ENCODE measurements at regions of chr7 and their contacts with region 1.

Region 1: GRCh38 chr7:90211391-90212148 is at the start of gene STEAP2:
- DNase-seq: peak in 1 of 9 donors; percentile 35
- ATAC-seq: peak; percentile 68
- H3K4me3 ChIP-seq: no peak within 1 kb of the TSS
- H3K4me3 Mint-ChIP-seq: peak within 1 kb of the TSS in 8 of 10 donors; percentile 10 to 66 (median 45)
- H3K27ac ChIP-seq: no peak within 1 kb of the TSS
- H3K27ac Mint-ChIP-seq: no peak within 1 kb of the TSS
- H3K4me1 ChIP-seq: no peaks in the 10 kb centered on the region
- H3K4me1 Mint-ChIP-seq: peaks cover 0 to 6% (median 6%) of the 10 kb centered on the region in 7 donors
- H3K27me3 ChIP-seq: no peaks in the 10 kb centered on the region
- H3K27me3 Mint-ChIP-seq: peaks cover 10 to 27% (median 14%) of the 10 kb centered on the region in 5 donors
- total RNA-seq, gene STEAP2: 0.05 TPM in 1 of 5 experiments, not detected in the others

Region 2: DNA sequence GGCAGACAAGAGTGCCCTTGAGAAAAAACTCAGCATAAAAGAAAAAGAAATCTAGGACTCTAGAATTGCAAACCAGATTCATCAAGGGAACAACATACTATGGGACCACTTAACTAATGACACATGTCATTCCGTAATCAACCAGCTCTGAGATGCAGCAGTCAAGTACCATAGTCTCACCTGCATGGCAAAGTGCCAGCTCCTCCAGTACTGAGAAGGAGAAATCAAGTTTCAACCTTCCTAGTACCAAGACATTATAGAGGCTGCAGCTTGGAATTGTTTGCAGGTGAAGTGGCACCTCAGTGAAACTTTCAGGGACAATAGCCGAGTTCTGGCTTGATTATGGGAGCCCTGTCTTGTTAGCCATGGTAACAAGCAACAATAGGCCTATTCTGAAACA is 45.8 kb before region 1 on chr7:
- CTCF ChIA-PET with region 1: no interaction called
- POLR2A ChIA-PET with region 1: no interaction called
- intact Hi-C with region 1: loop called in 1 of 2 experiments (anchors 5 kb)
- DNase-seq: no peak
- ATAC-seq: no peak
- H3K4me3 ChIP-seq: no peak overlapping the region
- H3K4me3 Mint-ChIP-seq: no peak overlapping the region
- H3K27ac ChIP-seq: no peak overlapping the region
- H3K27ac Mint-ChIP-seq: no peak overlapping the region
- H3K4me1 ChIP-seq: no peaks in the 10 kb centered on the region
- H3K4me1 Mint-ChIP-seq: no peaks in the 10 kb centered on the region
- H3K27me3 ChIP-seq: no peaks in the 10 kb centered on the region
- H3K27me3 Mint-ChIP-seq: peaks cover 11 to 27% (median 25%) of the 10 kb centered on the region in 5 donors

Measured in naive thymus-derived CD4-positive, alpha-beta T cell (primary cell).